AG04449 (cell line): ENCODE measurements at regions of chr1 and their contacts with region 1.

Region 1: DNA sequence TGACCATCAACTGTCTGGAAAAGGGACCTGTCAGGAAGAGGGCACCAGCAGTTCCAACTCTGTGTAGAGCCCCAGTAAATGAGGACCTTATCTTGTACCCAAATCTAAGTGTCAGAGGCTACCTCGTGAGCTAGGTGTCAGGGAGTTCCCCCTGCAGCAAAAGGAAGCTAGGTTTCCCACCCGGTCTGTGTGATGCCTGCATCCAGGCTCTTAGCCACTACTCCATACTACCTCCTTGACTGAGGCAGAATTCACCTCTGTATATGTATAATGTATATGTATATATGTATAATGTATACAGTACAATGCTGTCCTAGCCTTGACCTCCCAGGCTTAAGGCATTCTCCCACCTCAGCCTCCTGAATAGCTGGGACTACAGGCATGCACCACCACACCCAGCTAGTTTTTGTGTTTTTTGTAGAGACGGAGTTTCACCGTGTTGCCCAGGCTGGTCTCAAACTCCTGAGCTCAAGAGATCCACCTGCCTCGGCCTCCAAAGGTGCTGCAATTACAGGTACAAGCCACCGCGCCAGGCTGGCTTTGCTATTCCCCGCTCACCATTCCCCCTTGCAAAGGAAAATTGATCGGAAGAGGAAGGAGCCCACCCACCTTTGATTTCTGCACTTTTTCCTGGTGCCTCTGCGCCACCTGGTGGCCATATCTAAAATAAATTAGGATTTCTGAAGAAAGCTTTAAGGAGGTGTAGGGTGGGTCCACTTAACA is 15.7 kb upstream of the LUZP1 start:
- DNase-seq: no peak
- H3K4me3 ChIP-seq: peak overlapping the region; percentile 41
- CTCF ChIP-seq: peak; percentile 45

Region 2: GRCh38 chr1:22936681-22937080 is 247.7 kb before region 1 on chr1:
- CTCF ChIA-PET with region 1: no interaction called
- POLR2A ChIA-PET with region 1: no interaction called
- DNase-seq: no peak
- H3K4me3 ChIP-seq: no peak overlapping the region
- CTCF ChIP-seq: no peak

Region 3: GRCh38 chr1:23081376-23081775 is 103.0 kb before region 1 on chr1:
- CTCF ChIA-PET with region 1: interaction called, 47 read pairs
- POLR2A ChIA-PET with region 1: no interaction called
- DNase-seq: no peak
- H3K4me3 ChIP-seq: no peak overlapping the region
- CTCF ChIP-seq: no peak

Region 4: GRCh38 chr1:23114424-23115079 is 69.8 kb before region 1 on chr1:
- CTCF ChIA-PET with region 1: interaction called, 24 read pairs
- POLR2A ChIA-PET with region 1: no interaction called
- DNase-seq: no peak
- H3K4me3 ChIP-seq: no peak overlapping the region
- CTCF ChIP-seq: no peak

Region 5: DNA sequence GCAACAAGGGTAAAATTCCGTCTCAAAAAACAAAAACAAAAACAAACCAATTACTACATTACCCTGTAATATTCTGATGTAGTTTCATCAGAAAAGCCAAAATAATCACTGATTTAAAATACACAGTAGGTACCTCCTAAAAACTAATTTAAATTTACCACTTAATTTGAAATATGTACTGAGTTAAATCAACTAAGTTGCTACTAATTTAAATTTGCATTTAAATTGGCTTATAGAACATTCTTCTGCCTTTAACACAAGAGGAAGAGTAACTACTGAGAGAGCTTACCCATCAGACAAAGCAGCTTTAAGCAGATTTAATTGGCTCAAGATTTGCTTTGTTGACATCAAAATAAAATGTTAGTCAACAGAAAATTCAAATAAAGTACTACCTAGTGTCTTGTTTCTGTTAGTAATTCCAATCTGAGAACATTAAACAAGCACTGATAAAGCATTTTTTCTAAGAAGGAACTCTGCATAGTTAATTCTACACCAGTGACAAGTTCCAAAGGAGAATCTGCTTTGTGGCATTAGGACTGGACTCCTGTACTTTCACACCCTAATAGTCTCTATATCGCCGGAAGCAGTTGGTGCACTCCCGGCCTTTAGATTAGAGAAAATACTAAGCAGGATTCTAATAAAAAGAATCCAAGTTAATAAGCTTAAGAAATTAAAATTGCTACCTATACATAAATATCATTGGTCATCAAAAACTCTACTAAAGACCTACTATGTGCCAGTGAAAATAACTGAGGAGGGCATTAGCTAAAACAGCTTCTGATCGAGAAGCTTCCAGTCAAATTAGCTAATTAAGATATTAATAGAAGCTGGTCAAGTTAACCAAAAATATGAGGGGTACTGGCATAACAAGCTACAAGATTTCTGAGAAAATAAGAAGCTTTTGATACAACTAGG is 24.2 kb before region 1 on chr1:
- CTCF ChIA-PET with region 1: interaction called, 161 read pairs
- POLR2A ChIA-PET with region 1: interaction called, 3 read pairs
- DNase-seq: no peak
- H3K4me3 ChIP-seq: no peak overlapping the region
- CTCF ChIP-seq: no peak

Region 6: DNA sequence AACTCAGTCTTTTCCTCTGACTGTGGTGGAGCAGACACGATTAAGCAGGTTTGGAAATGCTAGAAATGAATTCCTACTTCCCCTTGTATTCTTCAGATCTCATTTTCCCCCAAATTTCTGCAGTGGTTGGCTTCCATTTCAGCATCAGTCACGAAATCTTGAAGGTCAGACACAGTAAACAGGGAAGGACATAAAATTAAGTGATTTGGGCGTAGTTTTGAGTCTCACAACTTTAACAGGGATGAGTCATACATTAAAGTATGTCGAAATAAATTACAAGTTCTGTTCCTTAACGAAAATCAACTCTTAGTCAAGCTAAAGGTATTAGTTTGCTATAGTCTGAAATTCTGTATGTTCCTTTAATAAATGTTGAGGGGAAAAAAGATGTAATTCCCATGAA is 98.6 kb after region 1 on chr1:
- CTCF ChIA-PET with region 1: interaction called, 17 read pairs
- POLR2A ChIA-PET with region 1: no interaction called
- DNase-seq: peak; percentile 54
- H3K4me3 ChIP-seq: no peak overlapping the region
- CTCF ChIP-seq: no peak